ENCODE measurements at regions of chr2 and their contacts with region 1.

Region 1: GRCh38 chr2:30208452-30208851 is 22.9 kb upstream of the LBH start:
- DNase-seq: peak; percentile 41
- H3K4me3 Mint-ChIP-seq: no peak overlapping the region
- H3K27ac Mint-ChIP-seq: no peak overlapping the region
- H3K4me1 Mint-ChIP-seq: peaks cover 16% of the 10 kb centered on the region
- H3K27me3 Mint-ChIP-seq: no peaks in the 10 kb centered on the region

Region 2: DNA sequence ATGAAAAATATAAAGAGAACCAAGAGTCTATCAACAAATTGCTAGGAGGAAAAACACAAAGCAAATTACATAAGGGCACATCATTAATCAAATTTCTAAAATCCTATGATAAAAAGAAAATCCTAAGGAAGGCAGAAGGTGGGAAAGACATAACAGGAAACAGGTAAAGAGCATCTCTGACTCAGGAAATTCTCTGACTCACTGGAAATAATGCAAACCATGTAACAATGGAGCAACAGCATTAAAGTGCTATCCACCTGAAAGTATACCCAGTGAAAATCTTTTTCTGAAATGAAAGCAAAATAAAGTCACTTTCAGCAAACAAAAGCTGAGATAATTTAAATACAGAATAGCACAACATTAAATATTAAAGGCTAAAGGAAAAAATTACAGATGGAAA is 298.0 kb before region 1 on chr2:
- CTCF ChIA-PET with region 1: no interaction called
- POLR2A ChIA-PET with region 1: no interaction called
- DNase-seq: no peak
- H3K4me3 Mint-ChIP-seq: no peak overlapping the region
- H3K27ac Mint-ChIP-seq: no peak overlapping the region
- H3K4me1 Mint-ChIP-seq: no peaks in the 10 kb centered on the region
- H3K27me3 Mint-ChIP-seq: peaks cover 2% of the 10 kb centered on the region

Region 3: DNA sequence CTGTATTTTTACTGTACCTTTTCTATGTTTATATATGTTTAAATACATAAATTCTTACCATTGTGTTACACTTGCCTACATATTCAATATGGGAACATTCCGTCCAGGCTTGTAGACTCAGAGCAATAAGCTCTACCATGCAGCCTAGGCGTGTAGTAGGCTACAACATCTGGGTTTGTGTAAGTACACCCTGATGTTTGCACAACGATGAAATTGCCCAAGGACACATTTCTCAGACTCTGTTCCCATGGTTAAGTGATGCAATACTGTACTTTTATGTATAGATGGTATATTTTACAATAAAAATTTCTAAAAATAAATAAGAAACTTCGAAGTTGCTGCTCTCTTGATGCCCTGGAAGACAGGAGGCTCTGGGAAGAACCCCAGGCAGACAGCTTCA is 23.3 kb before region 1 on chr2:
- CTCF ChIA-PET with region 1: no interaction called
- POLR2A ChIA-PET with region 1: no interaction called
- DNase-seq: no peak
- H3K4me3 Mint-ChIP-seq: no peak overlapping the region
- H3K27ac Mint-ChIP-seq: no peak overlapping the region
- H3K4me1 Mint-ChIP-seq: peaks cover 5% of the 10 kb centered on the region
- H3K27me3 Mint-ChIP-seq: peaks cover 4% of the 10 kb centered on the region

Region 4: DNA sequence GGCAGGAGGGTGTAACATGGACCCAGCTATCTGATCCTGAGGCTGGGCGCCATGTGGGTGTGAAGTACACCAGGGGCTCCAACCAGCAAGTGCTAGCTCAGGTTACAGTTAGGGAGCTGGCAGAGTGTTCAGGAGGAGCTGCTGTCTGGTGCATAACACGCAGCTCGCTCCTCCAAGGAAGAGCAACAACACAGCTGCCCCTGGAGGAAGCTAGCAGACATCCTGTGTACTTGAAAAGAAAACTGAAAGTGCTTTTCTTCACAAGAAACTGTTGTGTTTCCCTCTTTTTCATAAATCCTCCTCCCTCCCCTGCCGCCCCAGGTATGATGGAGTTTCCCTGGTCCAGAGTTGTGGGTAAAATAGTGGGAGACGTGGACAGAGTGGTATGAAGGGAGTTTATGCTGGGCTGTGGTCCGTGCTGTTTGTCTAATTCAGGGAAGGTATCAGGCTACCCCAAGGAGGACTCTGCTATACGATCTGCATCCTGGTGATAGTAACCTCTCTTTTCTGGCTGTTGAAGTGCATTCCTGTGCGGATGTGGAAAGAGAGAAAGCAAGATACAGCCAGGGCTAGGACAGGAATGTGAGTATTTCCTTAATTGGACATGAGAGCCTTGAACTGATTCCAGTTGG is 16.8 kb after region 1 on chr2:
- CTCF ChIA-PET with region 1: interaction called, 10 read pairs
- POLR2A ChIA-PET with region 1: interaction called, 6 read pairs
- DNase-seq: peak; percentile 59
- H3K4me3 Mint-ChIP-seq: peak overlapping the region; percentile 95
- H3K27ac Mint-ChIP-seq: peak overlapping the region; percentile 93
- H3K4me1 Mint-ChIP-seq: peaks cover 59% of the 10 kb centered on the region
- H3K27me3 Mint-ChIP-seq: peaks cover 5% of the 10 kb centered on the region

Region 5: GRCh38 chr2:30250421-30250820 is 42.0 kb after region 1 on chr2:
- CTCF ChIA-PET with region 1: no interaction called
- POLR2A ChIA-PET with region 1: no interaction called
- DNase-seq: no peak
- H3K4me3 Mint-ChIP-seq: no peak overlapping the region
- H3K27ac Mint-ChIP-seq: no peak overlapping the region
- H3K4me1 Mint-ChIP-seq: peaks cover 49% of the 10 kb centered on the region
- H3K27me3 Mint-ChIP-seq: no peaks in the 10 kb centered on the region

Region 6: DNA sequence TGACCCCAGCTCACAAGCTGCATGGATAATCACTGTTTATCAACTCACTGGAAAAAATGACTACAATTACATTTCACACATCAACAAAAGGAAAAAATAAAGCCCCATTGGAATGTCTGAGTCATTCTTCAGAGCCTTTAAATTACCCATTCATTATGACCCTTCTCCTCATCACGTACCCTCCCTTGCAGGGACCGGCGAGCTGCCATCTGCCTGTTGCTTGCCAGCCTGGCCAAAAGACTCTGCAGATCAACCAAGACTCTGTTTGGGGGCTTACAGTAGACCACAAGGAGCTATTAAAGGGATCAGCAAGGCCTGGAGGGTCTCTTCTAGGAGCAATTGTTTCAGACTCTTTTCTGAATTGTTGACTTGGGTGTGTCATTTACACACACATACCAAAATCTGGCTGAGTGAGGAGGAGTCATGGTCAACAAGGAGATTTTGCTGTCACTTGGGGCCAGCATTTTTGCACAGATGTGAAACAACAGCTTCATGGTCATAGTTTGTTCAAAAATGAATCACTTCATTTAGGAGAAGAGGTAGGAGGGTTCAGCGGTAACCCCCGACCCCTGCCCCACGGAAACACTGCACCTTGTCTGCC is 64.9 kb after region 1 on chr2:
- CTCF ChIA-PET with region 1: no interaction called
- POLR2A ChIA-PET with region 1: no interaction called
- DNase-seq: no peak
- H3K4me3 Mint-ChIP-seq: no peak overlapping the region
- H3K27ac Mint-ChIP-seq: no peak overlapping the region
- H3K4me1 Mint-ChIP-seq: peaks cover 19% of the 10 kb centered on the region
- H3K27me3 Mint-ChIP-seq: no peaks in the 10 kb centered on the region

Region 7: DNA sequence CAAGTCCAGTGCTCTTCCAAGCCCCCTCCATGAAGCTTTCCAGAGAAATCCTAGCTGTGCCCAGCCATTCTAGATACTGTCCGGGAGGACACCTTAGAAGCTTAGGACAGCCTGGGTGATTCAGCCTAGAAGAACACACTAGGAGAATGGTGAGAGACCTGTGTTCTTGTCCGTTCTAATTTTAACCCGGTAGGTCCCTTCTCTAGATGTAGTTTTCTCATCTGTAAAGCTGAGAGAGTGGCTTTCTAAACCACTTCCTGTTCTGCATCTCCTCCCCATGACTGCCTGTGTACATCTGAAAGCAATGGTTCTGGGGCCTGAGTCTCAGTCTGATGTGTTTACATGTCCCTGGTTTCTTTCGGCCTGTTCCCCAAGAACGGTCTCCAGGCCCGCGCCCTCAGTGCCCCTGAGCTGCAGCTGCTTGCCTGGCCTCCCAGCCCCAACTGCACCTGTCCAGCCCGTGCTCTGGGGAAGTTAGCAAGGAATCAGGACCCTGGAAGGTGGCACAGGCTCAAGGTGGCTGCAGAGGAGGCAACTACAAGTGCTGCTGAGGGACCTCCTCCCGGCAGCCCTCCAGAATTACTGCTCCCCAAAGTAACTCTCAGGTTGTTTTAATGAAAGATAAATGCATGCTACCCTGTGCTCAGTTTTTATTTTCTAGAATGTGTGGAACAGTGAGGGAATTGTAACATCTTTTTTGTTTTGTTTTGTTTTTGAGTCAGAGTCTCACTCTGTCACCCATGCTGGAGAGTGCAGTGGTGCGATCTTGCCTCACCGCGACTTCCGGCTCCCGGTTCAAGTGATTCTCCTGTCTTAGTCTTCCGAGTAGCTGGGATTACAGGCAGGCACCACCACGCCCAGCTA is 128.8 kb after region 1 on chr2:
- CTCF ChIA-PET with region 1: interaction called, 25 read pairs
- POLR2A ChIA-PET with region 1: interaction called, 4 read pairs
- DNase-seq: peak; percentile 75
- H3K4me3 Mint-ChIP-seq: peak overlapping the region; percentile 72
- H3K27ac Mint-ChIP-seq: peak overlapping the region; percentile 98
- H3K4me1 Mint-ChIP-seq: peaks cover 65% of the 10 kb centered on the region
- H3K27me3 Mint-ChIP-seq: no peaks in the 10 kb centered on the region

Region 8: DNA sequence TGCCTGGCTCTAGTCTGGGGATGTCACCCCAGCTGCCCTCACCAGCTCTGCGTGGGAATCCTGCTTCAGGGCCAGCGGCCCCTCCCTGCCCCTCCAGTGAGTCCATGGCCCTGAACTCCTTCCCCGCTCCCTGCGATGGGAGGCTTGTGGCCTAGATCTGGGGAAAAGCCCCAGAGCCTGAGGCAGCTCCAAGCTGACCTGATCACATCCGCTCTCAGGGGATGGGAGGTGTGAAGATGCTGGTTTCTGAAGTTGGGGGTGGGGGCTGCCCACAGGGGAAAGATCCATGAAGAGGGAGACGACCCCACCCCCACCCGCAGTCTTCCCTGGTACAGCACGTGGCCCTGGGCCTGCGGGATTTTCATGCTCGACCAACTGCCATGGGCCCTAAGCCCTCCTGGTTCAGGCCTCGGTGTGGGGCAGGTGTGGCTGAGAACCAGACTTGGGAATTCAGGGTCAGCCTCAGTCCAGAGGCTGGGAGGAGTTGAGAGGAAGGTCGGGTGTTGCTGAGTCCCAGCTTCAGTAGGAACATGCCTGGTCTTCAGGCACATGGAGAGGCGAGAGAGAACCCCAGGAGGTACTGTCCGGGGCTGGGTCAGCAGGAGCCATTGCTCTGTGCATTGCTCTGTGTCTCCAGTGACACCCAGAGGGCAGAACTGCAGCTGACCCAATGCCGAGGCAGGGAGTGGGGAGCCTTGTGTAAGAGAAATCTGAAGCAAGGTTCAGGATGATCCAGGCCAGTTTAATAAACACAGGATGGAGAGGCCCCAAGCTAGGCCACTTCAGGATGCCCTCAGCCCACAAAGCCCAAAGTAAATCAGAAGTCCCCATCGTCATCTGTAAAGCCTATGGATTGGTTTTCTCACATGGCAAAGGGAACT is 483.7 kb after region 1 on chr2:
- CTCF ChIA-PET with region 1: interaction called, 10 read pairs
- POLR2A ChIA-PET with region 1: no interaction called
- DNase-seq: no peak
- H3K4me3 Mint-ChIP-seq: no peak overlapping the region
- H3K27ac Mint-ChIP-seq: no peak overlapping the region
- H3K4me1 Mint-ChIP-seq: no peaks in the 10 kb centered on the region
- H3K27me3 Mint-ChIP-seq: peaks cover 3% of the 10 kb centered on the region

Measured in activated CD4-positive, alpha-beta memory T cell treated with anti-CD3 and anti-CD28 coated beads, Interleukin-2, amount 10 ng/mL, durations not matched to agents 7 days and 5 days (primary cell).